ENCODE measurements at regions of chr15 and their contacts with region 1.

Region 1: GRCh38 chr15:52893338-52893737 is 103.2 kb upstream of the ONECUT1 start:
- DNase-seq: no peak
- ATAC-seq: no peak
- H3K4me3 ChIP-seq: no peak overlapping the region
- H3K27ac ChIP-seq: no peak overlapping the region
- H3K4me1 ChIP-seq: no peaks in the 10 kb centered on the region
- H3K27me3 ChIP-seq: no peaks in the 10 kb centered on the region
- CTCF ChIP-seq: no peak
- POLR2A ChIP-seq: no peak

Region 2: GRCh38 chr15:52653513-52654003 is 239.8 kb before region 1 on chr15:
- in situ Hi-C with region 1: no loop called
- intact Hi-C with region 1: no loop called
- DNase-seq: peak in 1 of 2 donors; percentile 47
- ATAC-seq: peak; percentile 80
- H3K4me3 ChIP-seq: no peak overlapping the region
- H3K27ac ChIP-seq: peak overlapping the region; percentile 79 to 89 (median 83)
- H3K4me1 ChIP-seq: peaks cover 90 to 98% of the 10 kb centered on the region in 2 donors
- H3K27me3 ChIP-seq: no peaks in the 10 kb centered on the region
- CTCF ChIP-seq: no peak
- POLR2A ChIP-seq: no peak

Region 3: GRCh38 chr15:52857937-52858781 is 35.2 kb before region 1 on chr15:
- in situ Hi-C with region 1: no loop called
- intact Hi-C with region 1: no loop called
- DNase-seq: no peak
- ATAC-seq: no peak
- H3K4me3 ChIP-seq: no peak overlapping the region
- H3K27ac ChIP-seq: no peak overlapping the region
- H3K4me1 ChIP-seq: no peaks in the 10 kb centered on the region
- H3K27me3 ChIP-seq: peaks cover 0 to 8% (median 0%) of the 10 kb centered on the region in 3 donors
- CTCF ChIP-seq: no peak
- POLR2A ChIP-seq: no peak

Region 4: GRCh38 chr15:52870015-52870414 is 23.3 kb before region 1 on chr15:
- in situ Hi-C with region 1: no loop called
- intact Hi-C with region 1: loop called (anchors 1 kb)
- DNase-seq: no peak
- ATAC-seq: no peak
- H3K4me3 ChIP-seq: no peak overlapping the region
- H3K27ac ChIP-seq: no peak overlapping the region
- H3K4me1 ChIP-seq: no peaks in the 10 kb centered on the region
- H3K27me3 ChIP-seq: no peaks in the 10 kb centered on the region
- CTCF ChIP-seq: no peak
- POLR2A ChIP-seq: no peak